Activated naive CD4-positive, alpha-beta T cell treated with anti-CD3 and anti-CD28 coated beads for 36 hours (primary cell): ENCODE measurements at regions of chr1 and their contacts with region 1.

Region 1: DNA sequence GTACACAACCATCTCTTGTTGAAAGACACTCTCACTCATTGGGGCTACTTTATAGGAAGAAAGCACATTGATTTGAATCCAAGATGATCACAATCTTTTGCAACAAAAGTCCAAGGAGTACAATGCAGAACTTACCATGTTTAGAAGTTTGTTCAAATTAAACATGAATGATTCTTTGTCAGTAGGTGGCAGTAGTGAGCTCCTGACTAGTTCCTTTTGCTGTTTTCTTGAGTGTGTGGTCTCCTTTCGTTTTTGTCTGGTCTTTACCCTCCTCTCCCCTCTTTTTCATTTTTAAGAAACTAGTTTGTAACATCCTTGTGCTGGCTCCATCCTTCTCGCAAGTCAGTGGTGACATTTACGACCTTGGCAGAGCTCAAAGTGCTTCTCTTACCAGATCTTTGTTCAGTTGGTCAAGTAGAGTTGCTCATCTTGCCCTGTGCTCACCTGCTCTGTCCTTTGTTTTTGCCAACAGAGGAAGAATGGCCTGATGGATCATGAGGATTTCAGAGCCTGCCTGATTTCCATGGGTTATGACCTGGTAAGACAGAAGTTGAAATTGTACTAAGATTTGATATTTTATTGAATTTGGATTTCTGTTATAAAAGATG is 35.7 kb upstream of the MTR start:
- DNase-seq: peak; percentile 7
- H3K4me3 Mint-ChIP-seq: no peak overlapping the region
- H3K27ac Mint-ChIP-seq: no peak overlapping the region
- H3K4me1 Mint-ChIP-seq: no peaks in the 10 kb centered on the region
- H3K27me3 Mint-ChIP-seq: no peaks in the 10 kb centered on the region

Region 2: DNA sequence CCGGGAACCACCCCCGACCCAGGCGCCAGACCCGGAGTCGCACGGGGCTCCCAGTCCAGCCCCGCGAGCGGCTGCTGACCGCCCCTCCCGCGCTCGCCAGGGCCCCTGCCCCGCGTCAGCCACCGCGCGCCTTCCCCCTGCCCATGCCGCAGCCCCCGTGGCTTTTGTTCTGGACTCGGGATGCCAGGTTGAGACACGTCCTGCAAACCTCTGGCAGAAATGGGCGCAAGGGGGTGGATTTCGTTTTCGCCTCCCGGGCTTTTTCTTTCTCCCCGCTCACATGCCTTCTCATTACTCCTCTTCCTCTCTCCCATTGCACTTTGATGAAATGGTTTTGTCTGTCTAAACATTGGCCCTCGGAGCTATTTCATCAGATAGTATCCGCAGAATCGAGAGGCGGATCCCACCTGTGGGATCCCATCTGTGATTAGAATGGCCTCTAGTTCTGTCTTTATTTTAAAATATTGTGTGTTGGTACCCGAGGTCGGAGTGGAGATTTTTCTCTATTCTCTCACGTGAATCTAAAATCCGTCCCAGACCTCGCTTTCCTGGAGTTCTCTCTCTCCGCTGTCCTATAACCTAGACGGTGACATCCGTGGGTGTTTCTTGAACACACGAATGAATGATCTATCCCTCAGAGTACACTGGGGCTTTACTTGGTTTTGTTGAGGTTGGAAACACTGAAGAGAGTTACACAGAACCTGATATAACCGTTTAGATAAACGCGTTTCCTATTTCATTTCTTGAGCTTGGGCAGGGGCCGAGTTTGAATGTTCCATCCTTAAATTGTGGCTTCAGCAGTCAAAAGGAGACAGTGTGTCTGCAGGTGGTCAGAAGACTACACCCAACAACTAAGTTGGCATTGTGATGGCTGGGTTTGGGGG is 363.3 kb before region 1 on chr1:
- CTCF ChIA-PET with region 1: no interaction called
- intact Hi-C with region 1: no loop called
- DNase-seq: no peak
- H3K4me3 Mint-ChIP-seq: peak overlapping the region; percentile 73
- H3K27ac Mint-ChIP-seq: no peak overlapping the region
- H3K4me1 Mint-ChIP-seq: peaks cover 18% of the 10 kb centered on the region
- H3K27me3 Mint-ChIP-seq: peaks cover 45% of the 10 kb centered on the region

Region 3: DNA sequence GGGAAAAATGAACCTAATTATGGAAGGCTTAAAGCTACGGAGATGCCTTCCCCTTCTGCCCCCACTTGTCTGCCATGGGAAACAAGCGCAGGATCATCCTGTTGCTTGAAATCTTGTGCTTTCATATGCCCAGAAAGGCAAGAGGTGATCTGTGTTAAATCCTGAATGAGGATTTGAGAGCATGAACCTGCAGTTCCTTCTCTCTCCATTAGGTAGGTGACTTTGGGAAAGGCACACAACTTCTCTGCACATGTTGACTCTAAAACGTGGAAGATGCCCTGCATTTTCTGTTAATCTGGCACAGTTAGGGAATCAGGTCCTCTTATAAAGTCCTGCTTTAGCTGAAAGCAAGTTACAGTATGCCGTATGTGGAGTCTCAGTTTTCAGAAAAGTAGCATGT is 10.9 kb before region 1 on chr1:
- CTCF ChIA-PET with region 1: interaction called, 17 read pairs
- intact Hi-C with region 1: no loop called
- DNase-seq: no peak
- H3K4me3 Mint-ChIP-seq: no peak overlapping the region
- H3K27ac Mint-ChIP-seq: no peak overlapping the region
- H3K4me1 Mint-ChIP-seq: no peaks in the 10 kb centered on the region
- H3K27me3 Mint-ChIP-seq: peaks cover 4% of the 10 kb centered on the region

Region 4: DNA sequence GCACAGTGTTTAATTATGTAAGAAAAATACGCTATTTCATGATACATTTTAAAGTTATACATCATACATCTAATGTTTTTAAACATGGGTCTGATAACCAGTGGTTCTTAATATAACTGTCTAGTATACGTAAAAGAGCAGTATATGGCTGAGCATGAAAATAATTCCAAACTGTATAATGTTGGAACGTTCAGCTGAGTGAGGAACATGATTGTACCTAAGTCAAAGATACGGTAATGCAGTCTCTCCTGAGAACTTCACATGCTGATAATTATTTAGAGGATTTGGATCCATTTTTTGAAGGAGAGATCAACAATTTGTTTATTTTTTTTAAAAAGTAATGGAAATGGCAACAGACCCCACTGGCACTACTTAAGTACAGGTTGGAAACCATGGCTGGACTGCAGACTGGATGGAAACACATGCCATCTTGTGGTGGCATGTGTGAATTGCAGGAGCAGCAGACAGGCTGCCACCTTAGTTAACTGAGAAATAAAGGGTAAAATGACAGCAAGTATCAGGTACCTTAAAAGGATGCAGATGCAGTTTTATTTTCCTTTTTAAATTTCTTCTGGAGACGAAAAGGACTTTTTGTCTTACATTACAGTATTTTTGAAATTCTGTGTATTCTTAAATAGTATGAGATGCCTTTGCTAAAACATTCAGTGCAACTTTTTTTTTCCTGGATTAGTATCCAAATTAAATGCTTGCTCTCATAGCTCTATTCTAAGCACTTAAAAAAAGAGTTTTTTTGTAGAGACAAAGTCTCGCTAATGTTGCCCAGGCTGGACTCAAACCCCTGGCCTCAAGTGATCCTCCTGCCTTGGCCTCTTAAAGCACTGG is 109.5 kb after region 1 on chr1:
- CTCF ChIA-PET with region 1: interaction called, 31 read pairs
- intact Hi-C with region 1: loop called (anchors 1 kb)
- DNase-seq: peak; percentile 61
- H3K4me3 Mint-ChIP-seq: no peak overlapping the region
- H3K27ac Mint-ChIP-seq: no peak overlapping the region
- H3K4me1 Mint-ChIP-seq: peaks cover 2% of the 10 kb centered on the region
- H3K27me3 Mint-ChIP-seq: no peaks in the 10 kb centered on the region

Region 5: DNA sequence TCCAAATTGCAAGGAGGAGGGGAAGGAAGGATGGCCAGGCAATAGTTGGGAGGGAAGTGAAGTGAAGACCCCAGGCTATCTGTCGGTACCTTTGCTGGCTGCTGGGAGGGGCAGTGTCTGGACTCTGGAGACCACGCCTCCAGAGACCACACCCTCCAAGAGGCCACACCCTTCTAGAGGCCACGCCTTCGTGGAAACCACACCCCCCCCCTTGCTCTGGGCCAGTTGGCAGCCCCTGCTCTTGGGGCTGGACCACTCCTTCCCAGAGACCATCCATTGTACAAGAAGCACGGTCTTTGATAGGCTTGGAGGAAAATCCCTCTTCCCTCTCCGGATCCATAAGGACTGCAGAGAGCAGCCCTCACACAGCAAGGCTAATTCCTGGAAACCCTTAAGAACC is 355.7 kb after region 1 on chr1:
- CTCF ChIA-PET with region 1: no interaction called
- intact Hi-C with region 1: loop called (anchors 10 kb)
- DNase-seq: no peak
- H3K4me3 Mint-ChIP-seq: no peak overlapping the region
- H3K27ac Mint-ChIP-seq: no peak overlapping the region
- H3K4me1 Mint-ChIP-seq: no peaks in the 10 kb centered on the region
- H3K27me3 Mint-ChIP-seq: peaks cover 2% of the 10 kb centered on the region

Region 6: GRCh38 chr1:237562242-237562823 is 803.0 kb after region 1 on chr1:
- CTCF ChIA-PET with region 1: interaction called, 7 read pairs
- intact Hi-C with region 1: loop called (anchors 1 kb)
- DNase-seq: no peak
- H3K4me3 Mint-ChIP-seq: no peak overlapping the region
- H3K27ac Mint-ChIP-seq: no peak overlapping the region
- H3K4me1 Mint-ChIP-seq: no peaks in the 10 kb centered on the region
- H3K27me3 Mint-ChIP-seq: peaks cover 7% of the 10 kb centered on the region